ENCODE measurements at regions of chr10 and their contacts with region 1.

Region 1: DNA sequence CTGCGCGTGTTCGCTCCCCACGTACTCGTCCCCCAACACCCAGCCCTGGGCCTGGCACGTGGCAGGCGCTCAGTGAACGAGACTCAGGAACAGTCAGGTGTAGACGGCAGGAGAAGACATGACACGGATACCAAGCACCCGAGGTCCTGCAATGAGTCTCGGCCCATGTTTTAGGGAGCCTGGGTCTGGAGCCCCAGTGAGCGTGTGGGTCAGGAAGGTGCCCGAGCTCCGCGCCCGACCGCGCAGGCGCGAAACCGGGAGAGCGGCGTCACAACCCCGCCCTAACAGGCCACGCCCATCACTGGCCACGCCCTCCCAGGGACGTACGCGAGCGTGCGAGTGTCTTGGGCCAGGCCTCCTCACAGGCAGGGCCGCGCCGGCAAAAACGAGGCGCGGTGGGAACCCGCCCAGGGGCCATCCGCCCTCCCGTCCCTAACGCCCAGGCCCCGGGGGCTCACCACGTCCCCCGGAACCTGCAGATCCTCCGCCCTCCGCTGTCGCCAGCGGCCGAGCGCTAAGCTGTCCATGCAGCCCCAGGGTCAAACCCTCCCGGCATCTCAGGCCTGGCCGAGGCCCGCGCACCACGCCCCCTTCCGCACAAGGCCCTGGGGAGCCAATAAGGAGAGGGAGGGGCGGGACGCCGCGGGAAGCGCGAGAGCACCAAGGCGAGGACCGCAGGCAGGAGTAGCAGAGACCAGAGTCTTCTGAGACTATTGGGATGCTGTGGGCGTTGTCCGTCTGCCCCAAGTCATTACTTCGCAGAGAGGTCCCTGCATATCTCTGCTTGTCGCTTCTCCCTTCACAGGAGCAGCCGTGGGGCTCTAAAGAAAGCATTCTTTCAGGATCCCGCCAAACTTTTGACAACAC is at the start of gene C10orf143:
- DNase-seq: peak; percentile 97
- ATAC-seq: peak; percentile 84
- H3K4me3 Mint-ChIP-seq: peak within 1 kb of the TSS; percentile 92
- H3K27ac Mint-ChIP-seq: peak within 1 kb of the TSS; percentile 97
- H3K4me1 Mint-ChIP-seq: peaks cover 43% of the 10 kb centered on the region
- H3K27me3 Mint-ChIP-seq: no peaks in the 10 kb centered on the region
- CTCF ChIP-seq: no peak
- total RNA-seq, gene C10orf143: 4.4 to 5.1 TPM

Region 2: DNA sequence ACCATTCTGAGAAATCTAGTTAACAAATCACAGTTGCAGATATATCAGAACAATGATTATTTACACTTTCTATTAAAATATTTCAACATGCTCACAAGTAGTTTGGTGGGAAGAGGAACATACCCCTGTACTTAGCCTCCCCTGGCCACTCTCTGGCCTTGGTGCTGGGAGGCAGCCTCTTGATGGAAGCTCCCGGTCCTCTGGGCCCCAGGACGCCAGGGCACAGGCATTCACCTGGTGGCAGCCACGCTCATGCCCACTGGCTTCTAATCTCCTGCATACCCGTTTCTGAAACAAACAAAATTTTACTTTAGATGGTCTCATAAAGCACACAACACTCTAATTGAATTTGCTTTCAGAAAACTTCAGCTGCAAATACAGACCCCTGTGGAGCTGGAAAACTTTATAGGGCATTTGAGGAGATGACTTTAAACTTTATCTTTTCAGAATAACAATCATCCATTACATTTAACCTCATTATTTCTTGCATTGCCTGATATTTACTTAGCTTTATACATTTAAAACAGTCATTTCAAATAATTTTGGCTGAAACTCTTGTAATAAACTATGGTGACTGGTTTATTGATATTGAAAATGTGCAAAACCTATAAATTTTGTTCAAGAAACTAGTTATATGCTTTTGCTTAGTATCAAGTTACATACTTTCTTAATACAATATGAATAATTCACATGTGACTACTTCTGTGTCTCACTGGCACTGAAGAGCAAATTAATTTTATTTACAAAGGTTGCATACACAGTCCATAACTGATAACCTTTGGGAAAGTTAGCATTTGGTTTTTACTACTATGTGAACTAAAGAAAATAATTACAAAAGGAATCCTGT is 30.6 kb before region 1 on chr10:
- CTCF ChIA-PET with region 1: no interaction called
- POLR2A ChIA-PET with region 1: no interaction called
- intact Hi-C with region 1: no loop called
- DNase-seq: no peak
- ATAC-seq: no peak
- H3K4me3 Mint-ChIP-seq: no peak overlapping the region
- H3K27ac Mint-ChIP-seq: no peak overlapping the region
- H3K4me1 Mint-ChIP-seq: no peaks in the 10 kb centered on the region
- H3K27me3 Mint-ChIP-seq: no peaks in the 10 kb centered on the region
- CTCF ChIP-seq: no peak

Region 3: DNA sequence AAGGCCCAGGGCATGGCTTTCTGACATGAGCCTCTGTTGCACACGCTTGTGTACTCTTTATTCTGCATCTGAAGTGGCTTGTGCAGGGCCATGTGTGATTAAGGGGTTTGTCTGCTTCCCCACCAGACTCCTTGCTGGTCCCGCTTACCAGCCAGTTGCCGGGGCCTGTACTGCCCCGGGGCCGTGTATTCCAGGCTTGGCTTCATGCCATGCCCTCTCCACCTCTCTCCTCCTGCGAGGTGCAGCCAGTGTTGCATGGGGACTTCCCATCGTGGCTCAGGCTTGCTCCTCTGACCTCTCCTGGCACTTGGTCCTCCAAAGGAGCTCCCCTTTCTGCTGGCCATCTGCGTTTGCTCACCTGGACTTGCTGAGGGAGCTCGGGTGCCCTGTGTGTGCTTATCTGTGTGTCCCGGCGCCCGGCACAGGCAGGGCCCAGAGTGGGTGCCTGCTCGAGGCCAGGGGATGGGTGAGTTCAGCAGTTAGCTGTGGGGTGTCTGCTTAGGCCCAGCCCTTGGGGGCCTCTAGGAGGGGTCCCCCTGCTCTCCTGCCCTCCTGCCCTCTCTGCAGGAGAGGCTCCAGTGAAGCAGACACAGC is 11.1 kb after region 1 on chr10:
- CTCF ChIA-PET with region 1: interaction called, 44 read pairs
- POLR2A ChIA-PET with region 1: interaction called, 25 read pairs
- intact Hi-C with region 1: no loop called
- DNase-seq: no peak
- ATAC-seq: no peak
- H3K4me3 Mint-ChIP-seq: no peak overlapping the region
- H3K27ac Mint-ChIP-seq: no peak overlapping the region
- H3K4me1 Mint-ChIP-seq: no peaks in the 10 kb centered on the region
- H3K27me3 Mint-ChIP-seq: peaks cover 9% of the 10 kb centered on the region
- CTCF ChIP-seq: no peak

Region 4: GRCh38 chr10:130136226-130137089 is 26.0 kb after region 1 on chr10 and contains the start of gene GLRX3:
- CTCF ChIA-PET with region 1: interaction called, 32 read pairs
- POLR2A ChIA-PET with region 1: interaction called, 54 read pairs
- intact Hi-C with region 1: loop called (anchors 1 kb)
- DNase-seq: peak; percentile 93
- ATAC-seq: peak; percentile 89
- H3K4me3 Mint-ChIP-seq: peak within 1 kb of the TSS; percentile 88
- H3K27ac Mint-ChIP-seq: peak within 1 kb of the TSS; percentile 84
- H3K4me1 Mint-ChIP-seq: peaks cover 40% of the 10 kb centered on the region
- H3K27me3 Mint-ChIP-seq: peaks cover 9% of the 10 kb centered on the region
- CTCF ChIP-seq: no peak
- total RNA-seq, gene GLRX3: 109 to 121 TPM